GM12878 (cell line): ENCODE measurements at regions of chr4 and their contacts with region 1.

Region 1: GRCh38 chr4:94451695-94452475 is at the start of gene PDLIM5:
- DNase-seq: peak; percentile 66
- ATAC-seq: peak; percentile 91
- H3K4me3 ChIP-seq: peak within 1 kb of the TSS; percentile 87
- H3K27ac ChIP-seq: peak within 1 kb of the TSS; percentile 59
- H3K4me1 ChIP-seq: peaks cover 5% of the 10 kb centered on the region; the same call in 1 of the 2 replicates
- H3K27me3 ChIP-seq: no peaks in the 10 kb centered on the region
- CTCF ChIP-seq: no peak
- EP300 ChIP-seq: 0 out of 4 replicates have a peak, but pooled peaks of 1 of the 2 experiments have one; percentile 11
- POLR2A ChIP-seq: peak; percentile 99
- RAD21 ChIP-seq: no peak
- polyA plus RNA-seq, gene PDLIM5: 10.0 to 15.2 TPM

Region 2: DNA sequence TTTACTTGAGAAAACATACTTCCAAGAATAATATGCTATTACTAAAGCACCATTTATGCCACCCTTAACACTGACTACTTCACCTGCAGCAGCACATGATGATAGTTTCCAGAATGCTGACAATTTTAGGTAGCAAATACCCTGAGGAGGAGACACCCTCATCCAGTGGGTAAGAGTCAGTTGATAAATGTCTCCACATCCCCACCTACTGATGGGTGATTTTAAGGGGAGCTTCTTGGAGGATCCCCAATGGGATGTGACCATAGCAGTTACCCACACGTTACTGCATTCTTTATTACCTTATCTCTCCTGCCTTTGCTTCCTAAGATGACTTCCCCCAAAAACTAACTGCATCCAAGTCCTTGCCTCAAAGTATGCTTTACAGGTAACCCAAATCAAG is 375.4 kb before region 1 on chr4:
- CTCF ChIA-PET with region 1: no interaction called
- POLR2A ChIA-PET with region 1: no interaction called
- RAD21 ChIA-PET with region 1: no interaction called
- SMC1A ChIA-PET with region 1: no interaction called
- in situ Hi-C with region 1: no loop called
- intact Hi-C with region 1: no loop called
- DNase-seq: no peak
- ATAC-seq: peak; percentile 32; the same call in 2 of the 3 replicates
- H3K4me3 ChIP-seq: no peak overlapping the region
- H3K27ac ChIP-seq: no peak overlapping the region
- H3K4me1 ChIP-seq: no peaks in the 10 kb centered on the region
- H3K27me3 ChIP-seq: no peaks in the 10 kb centered on the region
- CTCF ChIP-seq: peak in 1 of 3 experiments; percentile 15; a peak in 1 of 6 replicates
- EP300 ChIP-seq: no peak
- POLR2A ChIP-seq: no peak
- RAD21 ChIP-seq: no peak

Region 3: GRCh38 chr4:94208266-94208665 is 243.6 kb before region 1 on chr4:
- CTCF ChIA-PET with region 1: no interaction called
- POLR2A ChIA-PET with region 1: no interaction called
- RAD21 ChIA-PET with region 1: no interaction called
- SMC1A ChIA-PET with region 1: no interaction called
- in situ Hi-C with region 1: no loop called
- intact Hi-C with region 1: no loop called
- DNase-seq: no peak
- ATAC-seq: peak; percentile 8; the same call in 1 of the 3 replicates
- H3K4me3 ChIP-seq: peak overlapping the region; percentile 94
- H3K27ac ChIP-seq: peak overlapping the region; percentile 98
- H3K4me1 ChIP-seq: peaks cover 5% of the 10 kb centered on the region; the same call in 1 of the 2 replicates
- H3K27me3 ChIP-seq: no peaks in the 10 kb centered on the region
- CTCF ChIP-seq: no peak
- EP300 ChIP-seq: no peak
- POLR2A ChIP-seq: no peak
- RAD21 ChIP-seq: no peak

Region 4: DNA sequence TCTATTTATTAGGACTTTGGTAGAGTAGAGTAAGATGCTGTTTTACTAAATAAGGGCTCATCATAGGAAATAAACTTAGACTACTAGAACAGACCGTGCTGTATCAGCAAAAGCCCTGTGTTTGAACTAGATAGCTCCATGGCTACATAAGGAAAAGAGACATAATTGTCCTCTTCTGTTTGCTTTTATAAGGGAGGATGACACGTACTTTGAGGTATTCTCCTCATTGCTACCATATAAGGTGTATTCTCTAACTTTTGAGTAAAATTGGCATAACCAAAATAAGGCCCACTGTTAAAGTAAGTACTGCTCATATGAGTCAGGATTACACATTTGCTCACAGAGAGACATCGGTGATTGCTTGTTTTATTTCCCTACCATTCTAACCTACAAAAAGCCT is 64.2 kb after region 1 on chr4:
- CTCF ChIA-PET with region 1: no interaction called
- POLR2A ChIA-PET with region 1: interaction called, 5 read pairs
- RAD21 ChIA-PET with region 1: interaction called, 9 read pairs
- SMC1A ChIA-PET with region 1: interaction called, 5 read pairs
- in situ Hi-C with region 1: no loop called
- intact Hi-C with region 1: loop called (anchors 5 kb)
- DNase-seq: no peak
- ATAC-seq: no peak
- H3K4me3 ChIP-seq: no peak overlapping the region
- H3K27ac ChIP-seq: no peak overlapping the region
- H3K4me1 ChIP-seq: peaks cover 17% of the 10 kb centered on the region
- H3K27me3 ChIP-seq: no peaks in the 10 kb centered on the region
- CTCF ChIP-seq: no peak
- EP300 ChIP-seq: no peak
- POLR2A ChIP-seq: no peak
- RAD21 ChIP-seq: no peak

Region 5: DNA sequence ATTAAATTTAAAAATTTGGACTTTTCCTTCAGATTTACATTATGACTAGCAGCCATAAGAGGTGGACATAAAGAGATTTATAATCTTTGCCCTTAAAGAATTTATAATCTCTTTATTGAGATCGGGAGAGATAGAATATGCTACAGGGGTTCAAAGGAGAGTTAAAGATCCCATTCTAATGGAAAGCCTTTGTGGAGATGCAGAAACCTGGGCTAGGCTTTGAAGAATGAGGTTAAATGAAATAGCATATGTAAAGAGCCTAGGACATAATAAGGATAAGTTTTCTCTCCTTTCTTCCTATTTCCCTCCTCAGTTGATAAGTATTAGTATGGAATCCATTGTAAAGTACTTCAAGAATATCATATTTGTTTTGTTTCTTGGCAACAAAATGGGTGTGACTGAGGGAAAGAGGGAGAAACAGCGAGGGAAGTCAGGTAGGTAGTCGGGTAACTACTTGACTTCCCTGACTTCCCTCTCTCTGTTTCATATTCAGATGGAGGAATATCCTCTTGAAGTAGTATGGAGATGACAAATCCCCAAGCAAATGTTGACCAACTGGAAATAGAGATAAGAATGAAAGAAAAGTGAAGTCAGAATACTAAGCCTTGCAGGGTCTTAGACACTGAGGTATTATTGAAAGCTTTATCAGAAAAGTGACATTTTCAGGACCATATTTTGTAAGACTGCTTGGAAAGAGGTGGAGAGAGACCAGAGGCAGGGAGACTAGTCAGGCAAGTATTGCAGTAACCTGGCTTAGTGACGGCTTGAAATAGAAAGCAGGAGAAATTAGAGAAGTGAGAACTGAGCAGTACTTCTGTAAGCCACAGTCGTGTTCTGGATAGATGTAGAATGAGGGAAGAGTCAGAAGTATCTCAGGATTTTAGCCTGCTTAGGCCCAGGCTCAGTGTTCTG is 82.8 kb after region 1 on chr4:
- CTCF ChIA-PET with region 1: no interaction called
- POLR2A ChIA-PET with region 1: interaction called, 10 read pairs
- RAD21 ChIA-PET with region 1: interaction called, 3 read pairs
- SMC1A ChIA-PET with region 1: interaction called, 4 read pairs
- in situ Hi-C with region 1: no loop called
- intact Hi-C with region 1: loop called (anchors 5 kb)
- DNase-seq: peak; percentile 61
- ATAC-seq: peak; percentile 94
- H3K4me3 ChIP-seq: no peak overlapping the region
- H3K27ac ChIP-seq: 0 out of 2 replicates have a peak overlapping the region, but pooled peaks have one; percentile 20
- H3K4me1 ChIP-seq: peaks cover 15% of the 10 kb centered on the region
- H3K27me3 ChIP-seq: no peaks in the 10 kb centered on the region
- CTCF ChIP-seq: no peak
- EP300 ChIP-seq: peak in 1 of 2 experiments; percentile 52; a peak in 1 of 4 replicates
- POLR2A ChIP-seq: no peak
- RAD21 ChIP-seq: no peak

Region 6: GRCh38 chr4:94571298-94571697 is 119.4 kb after region 1 on chr4:
- CTCF ChIA-PET with region 1: no interaction called
- POLR2A ChIA-PET with region 1: no interaction called
- RAD21 ChIA-PET with region 1: no interaction called
- SMC1A ChIA-PET with region 1: interaction called, 7 read pairs
- in situ Hi-C with region 1: no loop called
- intact Hi-C with region 1: loop called (anchors 5 kb)
- DNase-seq: no peak
- ATAC-seq: no peak
- H3K4me3 ChIP-seq: no peak overlapping the region
- H3K27ac ChIP-seq: no peak overlapping the region
- H3K4me1 ChIP-seq: no peaks in the 10 kb centered on the region
- H3K27me3 ChIP-seq: no peaks in the 10 kb centered on the region
- CTCF ChIP-seq: no peak
- EP300 ChIP-seq: no peak
- POLR2A ChIP-seq: no peak
- RAD21 ChIP-seq: no peak